ENCODE measurements at regions of chr9 and their contacts with region 1.

Region 1: GRCh38 chr9:113868501-113868900 is 7.6 kb upstream of the ZNF618 start:
- DNase-seq: no peak
- ATAC-seq: no peak
- H3K4me3 ChIP-seq: no peak overlapping the region
- H3K27ac ChIP-seq: no peak overlapping the region
- H3K4me1 ChIP-seq: no peaks in the 10 kb centered on the region
- H3K27me3 ChIP-seq: no peaks in the 10 kb centered on the region

Region 2: GRCh38 chr9:113817171-113817570 is 51.3 kb before region 1 on chr9:
- intact Hi-C with region 1: loop called in 1 of 2 experiments (anchors 10 kb)
- DNase-seq: no peak
- ATAC-seq: no peak
- H3K4me3 ChIP-seq: no peak overlapping the region
- H3K27ac ChIP-seq: no peak overlapping the region
- H3K4me1 ChIP-seq: no peaks in the 10 kb centered on the region
- H3K27me3 ChIP-seq: no peaks in the 10 kb centered on the region

Measured in aorta (tissue), 5 donors.